ENCODE measurements at regions of chr16 and their contacts with region 1.

Region 1: DNA sequence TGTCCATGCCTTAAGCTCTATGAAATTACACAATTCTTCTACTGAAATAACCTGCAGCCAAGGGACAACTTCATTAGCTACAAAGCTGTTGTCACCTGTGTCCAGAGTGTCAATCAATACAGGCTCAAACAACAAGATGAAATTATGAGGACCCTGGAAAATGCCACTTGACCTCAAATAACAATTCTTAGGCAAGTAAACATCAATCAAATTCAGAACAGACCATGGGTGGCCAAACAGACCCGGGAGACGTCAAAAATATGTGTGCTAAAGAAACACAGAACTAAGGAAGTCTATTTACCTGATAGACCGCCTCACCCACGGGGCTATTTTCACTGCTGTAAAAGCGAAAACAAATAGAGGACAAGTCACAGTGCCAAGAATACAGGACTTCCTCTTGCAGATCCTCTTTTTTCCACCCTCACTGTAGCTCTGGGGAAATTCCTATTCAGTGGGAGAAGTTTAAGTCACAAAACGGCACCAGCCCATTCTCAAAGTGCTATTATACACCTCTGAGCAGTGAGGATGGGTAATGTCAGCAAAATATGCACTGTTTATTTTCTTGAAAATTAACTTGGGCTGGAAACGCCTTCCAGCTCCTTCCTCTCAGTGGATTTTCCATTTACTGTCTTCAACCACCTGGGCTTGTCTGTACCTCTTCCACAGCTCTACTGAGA is 2.7 kb downstream of the LITAF start:
- DNase-seq: no peak
- ATAC-seq: no peak
- H3K4me3 ChIP-seq: no peak overlapping the region
- H3K27ac ChIP-seq: no peak overlapping the region
- H3K4me1 ChIP-seq: peaks cover 13 to 28% of the 10 kb centered on the region in 2 experiments
- H3K27me3 ChIP-seq: no peaks in the 10 kb centered on the region
- CTCF ChIP-seq: no peak
- POLR2A ChIP-seq: no peak
- RAD21 ChIP-seq: no peak

Region 2: DNA sequence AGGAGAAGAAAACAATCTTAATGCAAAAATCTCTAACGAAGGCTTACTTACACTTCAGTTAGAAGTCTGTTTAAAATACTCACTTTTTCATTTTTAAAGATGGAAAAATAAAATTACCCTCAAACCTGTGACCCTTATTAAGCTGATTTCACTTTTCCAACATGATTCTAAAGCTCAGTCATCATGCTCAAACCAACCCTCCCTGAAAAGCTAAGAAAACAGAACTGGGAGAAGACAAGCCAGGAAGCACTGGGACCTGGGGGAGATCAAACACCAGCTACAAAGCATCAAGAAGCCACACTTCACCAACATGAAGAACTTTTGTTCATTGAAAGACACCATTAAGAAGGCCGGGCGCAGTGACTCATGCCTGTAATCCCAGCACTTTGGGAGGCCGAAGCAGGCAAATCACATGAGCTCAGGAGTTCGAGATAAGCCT is 86.2 kb before region 1 on chr16:
- CTCF ChIA-PET with region 1: no interaction called
- POLR2A ChIA-PET with region 1: no interaction called
- RAD21 ChIA-PET with region 1: no interaction called
- intact Hi-C with region 1: no loop called
- DNase-seq: peak; percentile 92
- ATAC-seq: peak; percentile 57
- H3K4me3 ChIP-seq: peak overlapping the region in 1 of 2 experiments; percentile 39; a peak in 1 of 4 replicates
- H3K27ac ChIP-seq: peak overlapping the region; percentile 87
- H3K4me1 ChIP-seq: peaks cover 46 to 68% of the 10 kb centered on the region in 2 experiments
- H3K27me3 ChIP-seq: no peaks in the 10 kb centered on the region
- CTCF ChIP-seq: no peak
- POLR2A ChIP-seq: peak; percentile 34
- RAD21 ChIP-seq: no peak

Region 3: GRCh38 chr16:11639925-11640899 is 56.2 kb after region 1 on chr16:
- CTCF ChIA-PET with region 1: interaction called, 3 read pairs
- POLR2A ChIA-PET with region 1: no interaction called
- RAD21 ChIA-PET with region 1: interaction called in 1 of 2 experiments, 3 read pairs
- intact Hi-C with region 1: loop called (anchors 5 kb)
- DNase-seq: peak; percentile 63
- ATAC-seq: peak; percentile 57
- H3K4me3 ChIP-seq: no peak overlapping the region
- H3K27ac ChIP-seq: peak overlapping the region; percentile 58
- H3K4me1 ChIP-seq: peaks cover 20 to 31% of the 10 kb centered on the region in 2 experiments
- H3K27me3 ChIP-seq: no peaks in the 10 kb centered on the region
- CTCF ChIP-seq: no peak
- POLR2A ChIP-seq: no peak
- RAD21 ChIP-seq: peak; percentile 24; the same call in 1 of the 2 replicates